ENCODE measurements at regions of chr2 and their contacts with region 1.

Region 1: GRCh38 chr2:71923887-71924533 is 223.7 kb downstream of the CYP26B1 start:
- DNase-seq: peak; percentile 66
- ATAC-seq: peak; percentile 53
- H3K4me3 Mint-ChIP-seq: no peak overlapping the region
- H3K27ac Mint-ChIP-seq: no peak overlapping the region
- H3K4me1 Mint-ChIP-seq: no peaks in the 10 kb centered on the region
- H3K27me3 Mint-ChIP-seq: no peaks in the 10 kb centered on the region

Region 2: GRCh38 chr2:71910277-71910676 is 13.7 kb before region 1 on chr2:
- CTCF ChIA-PET with region 1: interaction called, 10 read pairs
- DNase-seq: no peak
- ATAC-seq: no peak
- H3K4me3 Mint-ChIP-seq: no peak overlapping the region
- H3K27ac Mint-ChIP-seq: no peak overlapping the region
- H3K4me1 Mint-ChIP-seq: no peaks in the 10 kb centered on the region
- H3K27me3 Mint-ChIP-seq: peaks cover 13% of the 10 kb centered on the region

Region 3: GRCh38 chr2:72150157-72150865 is 226.3 kb after region 1 on chr2:
- CTCF ChIA-PET with region 1: interaction called, 38 read pairs
- DNase-seq: peak; percentile 74
- ATAC-seq: peak; percentile 68
- H3K4me3 Mint-ChIP-seq: peak overlapping the region; percentile 43
- H3K27ac Mint-ChIP-seq: no peak overlapping the region
- H3K4me1 Mint-ChIP-seq: peaks cover 28% of the 10 kb centered on the region
- H3K27me3 Mint-ChIP-seq: peaks cover 62% of the 10 kb centered on the region

Region 4: DNA sequence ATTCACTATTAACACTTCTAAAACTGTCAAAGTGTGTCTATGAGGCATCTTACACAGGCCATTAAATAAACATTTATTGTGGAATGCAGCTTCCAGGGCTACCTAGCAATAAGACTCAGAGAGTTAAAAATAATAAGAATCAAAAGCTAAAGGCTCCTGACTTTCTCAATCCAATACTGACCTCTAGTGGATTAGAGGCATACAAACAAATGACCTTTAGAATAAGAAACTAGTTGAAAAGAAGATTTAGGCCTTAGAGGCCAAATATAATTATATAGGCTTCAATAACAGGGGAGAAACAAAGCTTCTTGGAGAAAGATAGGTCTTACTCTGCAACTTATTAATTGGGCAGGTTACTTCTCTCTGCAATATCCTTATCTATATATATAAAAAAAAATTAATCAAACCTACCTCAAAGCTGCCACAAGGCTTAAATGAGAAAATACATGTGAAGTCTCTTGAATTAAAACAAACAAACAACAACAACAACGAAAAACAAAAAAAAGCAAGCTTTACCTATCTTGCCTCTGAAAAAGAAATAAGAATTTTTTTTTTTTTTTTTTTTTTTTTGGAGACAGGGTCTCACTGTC is 655.7 kb after region 1 on chr2:
- CTCF ChIA-PET with region 1: interaction called, 10 read pairs
- DNase-seq: no peak
- ATAC-seq: no peak
- H3K4me3 Mint-ChIP-seq: no peak overlapping the region
- H3K27ac Mint-ChIP-seq: no peak overlapping the region
- H3K4me1 Mint-ChIP-seq: no peaks in the 10 kb centered on the region
- H3K27me3 Mint-ChIP-seq: no peaks in the 10 kb centered on the region